Cardiac septum (tissue), 1 donor: ENCODE measurements at regions of chr6 and their contacts with region 1.

Region 1: DNA sequence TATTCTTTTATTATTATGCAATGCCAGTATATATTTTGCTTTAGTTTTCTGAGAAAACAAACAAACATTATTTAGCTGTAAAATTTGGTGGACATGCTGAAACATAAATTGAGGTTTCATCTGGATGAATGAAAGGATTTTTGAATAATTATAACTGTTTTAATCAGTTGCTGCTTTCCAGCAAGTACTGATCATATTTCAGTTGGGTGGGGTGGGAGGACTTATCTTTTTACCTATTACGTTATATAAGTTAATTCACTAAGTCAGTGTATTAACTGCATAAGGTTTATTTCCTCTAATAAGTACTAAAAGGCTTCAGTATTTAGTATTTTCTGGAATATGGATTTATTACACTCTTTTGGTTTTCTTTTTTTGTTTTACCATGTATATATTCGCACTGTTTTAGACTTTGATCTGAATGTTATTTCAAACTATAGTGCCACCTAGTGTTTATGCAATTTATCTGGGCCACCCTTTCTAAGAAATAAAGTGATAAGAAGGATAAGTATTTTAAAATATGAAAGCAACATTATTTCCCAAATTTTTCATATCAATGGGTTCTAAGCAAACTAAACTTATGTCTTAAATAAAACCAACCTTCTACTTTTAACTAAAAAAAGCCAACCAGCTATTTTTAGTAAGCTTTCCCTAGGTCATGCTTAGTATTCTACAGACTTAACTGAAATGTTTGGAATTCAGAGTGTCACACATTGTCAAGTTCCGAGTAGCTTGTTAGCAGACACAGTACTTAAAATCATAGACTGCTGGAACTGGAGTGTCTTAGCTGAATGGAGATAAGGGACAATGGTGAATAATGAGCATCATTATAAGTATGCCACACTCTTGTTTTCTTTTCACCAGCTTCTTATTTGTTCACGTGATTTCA is 105.4 kb upstream of the MCHR2 start:
- DNase-seq: no peak

Region 2: DNA sequence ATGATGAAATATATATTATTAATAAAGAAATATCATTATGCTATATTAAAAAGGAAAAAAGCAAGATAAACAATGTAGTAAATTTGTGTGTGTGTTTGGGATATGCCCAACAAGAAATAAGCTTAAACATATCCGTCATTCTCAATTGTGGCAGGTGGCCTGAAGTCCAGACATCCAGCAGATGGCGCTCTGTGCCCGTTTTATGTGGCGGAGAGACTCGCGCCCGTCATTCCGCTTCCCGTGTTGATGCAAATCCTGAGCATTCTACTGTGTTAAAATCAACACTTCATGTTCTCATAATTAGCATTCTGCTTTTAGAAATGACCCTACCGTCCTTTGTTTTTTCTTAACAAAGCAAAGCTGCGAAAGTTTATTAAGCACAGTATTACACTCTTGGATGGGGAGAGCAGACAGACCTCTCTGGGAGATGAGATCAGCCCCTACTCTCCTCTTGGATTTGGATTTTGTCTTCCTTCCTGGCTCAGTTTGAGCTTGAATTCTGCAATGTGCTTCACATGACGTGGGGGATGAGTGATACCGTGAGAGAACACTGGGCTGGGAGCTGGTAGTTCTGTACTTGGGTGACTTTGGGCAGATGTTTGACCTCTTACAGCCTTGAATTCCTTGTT is 231.2 kb before region 1 on chr6:
- intact Hi-C with region 1: loop called (anchors 5 kb)
- DNase-seq: no peak